GM12878 (cell line): ENCODE measurements at regions of chr18 and their contacts with region 1.

Region 1: GRCh38 chr18:44920441-44920840 is 239.8 kb downstream of the SETBP1 start:
- DNase-seq: no peak
- ATAC-seq: peak; percentile 69
- H3K4me3 ChIP-seq: no peak overlapping the region
- H3K27ac ChIP-seq: no peak overlapping the region
- H3K4me1 ChIP-seq: no peaks in the 10 kb centered on the region
- H3K27me3 ChIP-seq: no peaks in the 10 kb centered on the region
- CTCF ChIP-seq: no peak
- EP300 ChIP-seq: no peak
- POLR2A ChIP-seq: no peak
- RAD21 ChIP-seq: no peak

Region 2: GRCh38 chr18:44901283-44901682 is 19.2 kb before region 1 on chr18:
- CTCF ChIA-PET with region 1: interaction called, 4 read pairs
- POLR2A ChIA-PET with region 1: no interaction called
- RAD21 ChIA-PET with region 1: interaction called, 4 read pairs
- SMC1A ChIA-PET with region 1: interaction called, 57 read pairs
- in situ Hi-C with region 1: no loop called
- intact Hi-C with region 1: no loop called
- DNase-seq: no peak
- ATAC-seq: peak; percentile 52; the same call in 2 of the 3 replicates
- H3K4me3 ChIP-seq: no peak overlapping the region
- H3K27ac ChIP-seq: no peak overlapping the region
- H3K4me1 ChIP-seq: no peaks in the 10 kb centered on the region
- H3K27me3 ChIP-seq: no peaks in the 10 kb centered on the region
- CTCF ChIP-seq: 0 out of 6 replicates have a peak, but pooled peaks of 1 of the 3 experiments have one; percentile 26
- EP300 ChIP-seq: no peak
- POLR2A ChIP-seq: no peak
- RAD21 ChIP-seq: peak; percentile 32; the same call in 1 of the 2 replicates

Region 3: DNA sequence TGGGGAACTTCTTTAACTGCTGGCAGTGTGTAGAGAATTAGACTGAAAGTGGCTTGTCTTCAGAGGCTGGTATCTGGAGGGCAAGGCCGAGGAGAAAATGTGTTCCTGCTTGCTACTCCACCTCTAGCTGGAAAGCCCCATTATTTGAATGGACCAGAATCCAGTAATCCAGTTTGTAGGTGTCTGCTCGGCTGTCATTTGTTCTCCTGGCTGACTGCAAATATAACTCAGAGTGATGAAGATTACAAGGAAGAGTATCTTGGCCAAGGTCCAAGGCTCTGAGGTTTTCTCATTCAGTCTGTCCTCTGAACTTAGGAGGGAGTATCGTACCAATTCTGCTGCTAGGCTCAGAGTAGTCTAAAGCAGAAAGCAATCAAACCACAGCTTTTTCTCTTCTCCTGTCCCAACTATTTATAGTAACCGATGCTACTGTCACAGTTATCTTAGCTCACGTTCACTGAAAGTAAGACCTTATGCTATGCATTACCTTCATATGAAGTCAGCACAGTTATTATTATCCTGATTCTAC is 11.2 kb before region 1 on chr18:
- CTCF ChIA-PET with region 1: interaction called, 4 read pairs
- POLR2A ChIA-PET with region 1: interaction called, 3 read pairs
- RAD21 ChIA-PET with region 1: interaction called, 8 read pairs
- SMC1A ChIA-PET with region 1: interaction called, 32 read pairs
- in situ Hi-C with region 1: no loop called
- intact Hi-C with region 1: no loop called
- DNase-seq: peak; percentile 68
- ATAC-seq: peak; percentile 85
- H3K4me3 ChIP-seq: peak overlapping the region; percentile 29; the same call in 1 of the 2 replicates
- H3K27ac ChIP-seq: 0 out of 2 replicates have a peak overlapping the region, but pooled peaks have one; percentile 13
- H3K4me1 ChIP-seq: peaks cover 45% of the 10 kb centered on the region
- H3K27me3 ChIP-seq: no peaks in the 10 kb centered on the region
- CTCF ChIP-seq: no peak
- EP300 ChIP-seq: peak in 1 of 2 experiments; percentile 53; a peak in 2 of 4 replicates
- POLR2A ChIP-seq: no peak
- RAD21 ChIP-seq: 0 out of 2 replicates have a peak, but pooled peaks have one; percentile 11

Region 4: GRCh38 chr18:44943311-44943881 is 23.0 kb after region 1 on chr18:
- CTCF ChIA-PET with region 1: interaction called, 3 read pairs
- POLR2A ChIA-PET with region 1: no interaction called
- RAD21 ChIA-PET with region 1: interaction called, 3 read pairs
- SMC1A ChIA-PET with region 1: interaction called, 12 read pairs
- in situ Hi-C with region 1: no loop called
- intact Hi-C with region 1: no loop called
- DNase-seq: no peak
- ATAC-seq: no peak
- H3K4me3 ChIP-seq: no peak overlapping the region
- H3K27ac ChIP-seq: no peak overlapping the region
- H3K4me1 ChIP-seq: no peaks in the 10 kb centered on the region
- H3K27me3 ChIP-seq: no peaks in the 10 kb centered on the region
- CTCF ChIP-seq: no peak
- EP300 ChIP-seq: no peak
- POLR2A ChIP-seq: no peak
- RAD21 ChIP-seq: no peak